Activated CD8-positive, alpha-beta T cell treated with anti-CD3 and anti-CD28 coated beads for 36 hours (primary cell): ENCODE measurements at regions of chr1 and their contacts with region 1.

Region 1: GRCh38 chr1:157580179-157580827 is 17.6 kb downstream of the FCRL4 start:
- DNase-seq: peak; percentile 35
- ATAC-seq: no peak
- H3K4me3 Mint-ChIP-seq: no peak overlapping the region
- H3K27ac Mint-ChIP-seq: no peak overlapping the region
- H3K4me1 Mint-ChIP-seq: no peaks in the 10 kb centered on the region
- H3K27me3 Mint-ChIP-seq: no peaks in the 10 kb centered on the region
- CTCF ChIP-seq: peak; percentile 70

Region 2: DNA sequence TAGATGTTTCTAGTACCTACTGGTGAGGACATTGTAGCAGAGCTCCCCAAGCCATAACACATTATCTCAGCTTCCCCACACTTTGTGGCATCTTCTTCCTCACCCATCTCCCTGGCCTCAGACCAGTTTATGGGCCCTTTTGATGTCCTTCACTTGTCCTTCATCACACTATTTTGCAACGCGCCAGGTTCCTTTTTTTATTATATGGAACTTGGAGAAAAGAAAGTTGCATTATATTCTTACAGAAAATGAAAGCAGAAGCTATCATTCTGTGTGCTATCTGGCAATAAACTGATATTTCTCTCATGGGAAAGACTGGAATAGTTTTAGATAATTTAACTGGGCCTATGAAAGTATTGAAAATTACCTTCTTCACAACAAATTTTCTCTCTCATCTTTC is 245.2 kb before region 1 on chr1:
- CTCF ChIA-PET with region 1: no interaction called
- POLR2A ChIA-PET with region 1: no interaction called
- intact Hi-C with region 1: no loop called
- DNase-seq: no peak
- ATAC-seq: no peak
- H3K4me3 Mint-ChIP-seq: no peak overlapping the region
- H3K27ac Mint-ChIP-seq: no peak overlapping the region
- H3K4me1 Mint-ChIP-seq: no peaks in the 10 kb centered on the region
- H3K27me3 Mint-ChIP-seq: peaks cover 10% of the 10 kb centered on the region
- CTCF ChIP-seq: no peak

Region 3: DNA sequence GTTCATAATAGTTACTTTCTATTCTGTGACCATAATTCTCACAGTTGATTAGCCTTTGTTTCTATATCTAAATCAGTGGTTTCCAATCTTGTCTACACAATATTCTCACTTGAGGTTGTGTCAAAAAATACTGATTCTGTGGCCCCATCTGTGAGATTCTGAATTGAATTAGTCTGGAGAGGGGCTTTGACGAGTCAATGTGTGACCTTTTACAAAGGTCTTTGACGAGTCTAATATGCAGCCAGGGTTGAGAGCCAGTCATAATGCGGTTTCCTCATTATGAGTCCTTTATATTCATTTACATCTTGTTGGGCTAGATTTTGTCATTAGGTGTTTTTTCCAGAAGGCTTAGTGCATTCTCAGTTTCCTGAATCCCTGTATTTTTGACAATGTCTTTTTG is 47.7 kb before region 1 on chr1:
- CTCF ChIA-PET with region 1: no interaction called
- POLR2A ChIA-PET with region 1: no interaction called
- intact Hi-C with region 1: no loop called
- DNase-seq: no peak
- ATAC-seq: no peak
- H3K4me3 Mint-ChIP-seq: no peak overlapping the region
- H3K27ac Mint-ChIP-seq: no peak overlapping the region
- H3K4me1 Mint-ChIP-seq: no peaks in the 10 kb centered on the region
- H3K27me3 Mint-ChIP-seq: peaks cover 20% of the 10 kb centered on the region
- CTCF ChIP-seq: no peak

Region 4: GRCh38 chr1:157562515-157562914 is 17.8 kb before region 1 on chr1:
- CTCF ChIA-PET with region 1: interaction called, 12 read pairs
- POLR2A ChIA-PET with region 1: no interaction called
- intact Hi-C with region 1: no loop called
- DNase-seq: no peak
- ATAC-seq: no peak
- H3K4me3 Mint-ChIP-seq: no peak overlapping the region
- H3K27ac Mint-ChIP-seq: no peak overlapping the region
- H3K4me1 Mint-ChIP-seq: no peaks in the 10 kb centered on the region
- H3K27me3 Mint-ChIP-seq: peaks cover 12% of the 10 kb centered on the region
- CTCF ChIP-seq: no peak

Region 5: DNA sequence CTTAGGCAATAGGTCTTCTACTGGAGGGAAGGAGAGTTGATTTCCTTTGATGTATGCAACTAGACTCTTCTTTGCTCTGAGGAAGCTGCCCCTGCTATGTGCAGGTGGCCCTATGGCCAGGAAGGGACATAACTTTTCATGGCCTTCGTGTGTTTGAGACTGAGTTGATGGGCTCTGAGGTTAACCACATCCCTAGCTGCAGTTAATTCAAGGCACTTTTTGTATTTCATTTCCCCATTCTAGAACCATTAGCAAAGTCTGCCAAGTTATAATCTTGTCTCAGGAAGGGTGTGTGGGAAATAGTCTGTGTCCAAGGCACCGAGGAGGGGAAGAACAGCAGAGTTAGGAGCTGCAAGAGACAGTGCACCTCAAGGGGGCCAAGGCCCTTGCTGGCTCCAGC is 15.1 kb after region 1 on chr1:
- CTCF ChIA-PET with region 1: interaction called, 16 read pairs
- POLR2A ChIA-PET with region 1: no interaction called
- intact Hi-C with region 1: no loop called
- DNase-seq: no peak
- ATAC-seq: no peak
- H3K4me3 Mint-ChIP-seq: no peak overlapping the region
- H3K27ac Mint-ChIP-seq: no peak overlapping the region
- H3K4me1 Mint-ChIP-seq: peaks cover 9% of the 10 kb centered on the region
- H3K27me3 Mint-ChIP-seq: peaks cover 4% of the 10 kb centered on the region
- CTCF ChIP-seq: no peak

Region 6: DNA sequence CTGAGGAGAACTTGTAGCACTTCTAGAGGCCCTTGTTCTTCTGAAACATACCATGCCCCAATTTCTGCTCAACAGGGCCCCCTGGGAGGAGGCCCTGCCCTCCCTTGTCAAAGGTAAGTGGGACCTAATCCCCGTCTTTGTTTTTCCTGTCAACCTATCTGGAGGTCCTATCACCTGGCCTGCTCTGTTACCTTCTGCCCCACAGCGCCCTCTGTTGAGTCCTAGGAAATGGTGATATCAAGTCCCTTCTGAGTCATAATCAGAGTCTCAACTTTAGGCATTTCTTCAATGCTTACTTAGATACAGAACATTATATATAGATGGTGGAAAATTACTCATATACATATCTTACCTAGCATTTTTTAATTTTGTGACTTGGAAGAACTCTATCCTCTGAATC is 45.8 kb after region 1 on chr1:
- CTCF ChIA-PET with region 1: interaction called, 16 read pairs
- POLR2A ChIA-PET with region 1: no interaction called
- intact Hi-C with region 1: no loop called
- DNase-seq: peak; percentile 65
- ATAC-seq: peak; percentile 49
- H3K4me3 Mint-ChIP-seq: no peak overlapping the region
- H3K27ac Mint-ChIP-seq: no peak overlapping the region
- H3K4me1 Mint-ChIP-seq: peaks cover 7% of the 10 kb centered on the region
- H3K27me3 Mint-ChIP-seq: peaks cover 5% of the 10 kb centered on the region
- CTCF ChIP-seq: peak; percentile 47

Region 7: GRCh38 chr1:157691285-157691920 is 111.1 kb after region 1 on chr1:
- CTCF ChIA-PET with region 1: interaction called, 28 read pairs
- POLR2A ChIA-PET with region 1: no interaction called
- intact Hi-C with region 1: loop called (anchors 10 kb)
- DNase-seq: no peak
- ATAC-seq: no peak
- H3K4me3 Mint-ChIP-seq: no peak overlapping the region
- H3K27ac Mint-ChIP-seq: no peak overlapping the region
- H3K4me1 Mint-ChIP-seq: no peaks in the 10 kb centered on the region
- H3K27me3 Mint-ChIP-seq: no peaks in the 10 kb centered on the region
- CTCF ChIP-seq: peak; percentile 52

Region 8: DNA sequence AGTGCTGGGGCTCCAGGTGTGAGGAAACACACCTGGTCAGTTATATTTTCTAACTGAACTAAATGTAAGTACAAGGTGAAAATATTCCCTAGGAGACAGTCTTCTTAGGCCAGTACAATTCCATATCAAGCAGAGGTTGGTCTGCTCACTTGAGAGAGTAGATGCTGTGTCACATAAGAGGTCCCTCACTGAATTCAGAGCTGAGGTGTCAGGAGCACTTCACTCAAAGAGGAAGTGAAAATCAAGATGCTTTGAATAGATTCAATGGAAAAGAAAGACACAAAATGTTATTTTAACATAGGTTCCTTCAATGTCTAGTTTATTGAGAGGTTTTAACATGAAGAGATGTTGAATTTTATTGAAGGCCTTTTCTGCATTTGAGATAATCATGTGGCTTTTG is 124.6 kb after region 1 on chr1:
- CTCF ChIA-PET with region 1: no interaction called
- POLR2A ChIA-PET with region 1: no interaction called
- intact Hi-C with region 1: no loop called
- DNase-seq: no peak
- ATAC-seq: no peak
- H3K4me3 Mint-ChIP-seq: no peak overlapping the region
- H3K27ac Mint-ChIP-seq: peak overlapping the region; percentile 72
- H3K4me1 Mint-ChIP-seq: peaks cover 4% of the 10 kb centered on the region
- H3K27me3 Mint-ChIP-seq: no peaks in the 10 kb centered on the region
- CTCF ChIP-seq: no peak